ENCODE measurements at regions of chr12 and their contacts with region 1.

Region 1: GRCh38 chr12:98227162-98227561 is 288.2 kb upstream of the TMPO start:
- DNase-seq: no peak
- H3K4me3 ChIP-seq: no peak overlapping the region
- H3K27ac ChIP-seq: no peak overlapping the region
- H3K4me1 ChIP-seq: no peaks in the 10 kb centered on the region
- H3K27me3 ChIP-seq: no peaks in the 10 kb centered on the region
- CTCF ChIP-seq: no peak

Region 2: DNA sequence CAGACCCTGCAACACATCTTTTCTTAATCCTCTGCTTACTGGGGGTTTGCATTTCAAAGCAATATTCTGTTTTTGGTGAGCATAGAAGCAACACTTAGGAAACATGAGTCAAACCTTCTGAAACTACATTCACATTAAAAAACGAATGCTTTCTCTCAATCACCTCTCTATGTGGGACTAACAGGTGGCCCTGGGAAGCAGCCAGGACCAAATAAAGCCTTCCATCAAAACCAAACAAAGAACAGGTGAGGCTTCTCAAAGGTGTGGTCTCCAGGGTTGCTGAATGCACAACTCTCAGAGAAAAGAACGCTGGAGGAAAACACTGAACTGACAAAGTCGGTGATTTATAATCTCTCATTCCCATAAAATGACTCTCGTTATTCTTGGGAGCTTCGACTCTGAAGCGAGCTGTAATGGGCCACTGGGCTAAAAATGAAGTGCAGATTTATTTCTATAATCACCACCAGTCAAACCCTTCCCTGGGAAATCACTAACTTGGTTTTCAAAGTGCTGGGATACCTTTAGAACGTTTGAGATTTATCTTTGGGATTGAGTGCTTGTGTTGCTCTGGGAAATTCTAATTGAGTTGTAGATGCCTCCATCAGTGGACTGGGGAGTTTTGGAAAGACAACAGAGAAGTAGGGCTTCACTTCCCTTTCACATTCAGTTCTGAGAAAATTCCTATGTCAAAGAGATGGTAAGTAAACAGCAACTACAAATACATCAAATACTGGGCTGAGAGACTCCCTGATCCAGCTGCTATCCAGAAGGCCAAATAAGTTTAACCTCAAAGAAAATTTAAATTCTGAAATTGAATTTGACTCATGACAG is 26.3 kb after region 1 on chr12:
- intact Hi-C with region 1: loop called (anchors 1 kb)
- DNase-seq: no peak
- H3K4me3 ChIP-seq: no peak overlapping the region
- H3K27ac ChIP-seq: no peak overlapping the region
- H3K4me1 ChIP-seq: no peaks in the 10 kb centered on the region
- H3K27me3 ChIP-seq: no peaks in the 10 kb centered on the region
- CTCF ChIP-seq: no peak